Activated naive CD4-positive, alpha-beta T cell treated with anti-CD3 and anti-CD28 coated beads for 36 hours (primary cell): ENCODE measurements at regions of chr11 and their contacts with region 1.

Region 1: GRCh38 chr11:125514336-125515101 is 18.5 kb upstream of the FEZ1 start:
- DNase-seq: peak; percentile 87
- H3K4me3 Mint-ChIP-seq: no peak overlapping the region
- H3K27ac Mint-ChIP-seq: peak overlapping the region; percentile 85
- H3K4me1 Mint-ChIP-seq: peaks cover 41% of the 10 kb centered on the region
- H3K27me3 Mint-ChIP-seq: no peaks in the 10 kb centered on the region

Region 2: GRCh38 chr11:124114942-124115781 is 1399.4 kb before region 1 on chr11 and contains the start of gene VWA5A:
- CTCF ChIA-PET with region 1: no interaction called
- intact Hi-C with region 1: loop called (anchors 5 kb)
- DNase-seq: peak; percentile 93
- H3K4me3 Mint-ChIP-seq: peak within 1 kb of the TSS; percentile 82
- H3K27ac Mint-ChIP-seq: peak within 1 kb of the TSS; percentile 56
- H3K4me1 Mint-ChIP-seq: peaks cover 9% of the 10 kb centered on the region
- H3K27me3 Mint-ChIP-seq: no peaks in the 10 kb centered on the region
- total RNA-seq, gene VWA5A: 9.7 to 11.4 TPM

Region 3: GRCh38 chr11:124953753-124954589 is 560.5 kb before region 1 on chr11 and contains the start of gene CCDC15:
- CTCF ChIA-PET with region 1: no interaction called
- intact Hi-C with region 1: loop called (anchors 10 kb)
- DNase-seq: peak; percentile 97
- H3K4me3 Mint-ChIP-seq: no peak within 1 kb of the TSS
- H3K27ac Mint-ChIP-seq: no peak within 1 kb of the TSS
- H3K4me1 Mint-ChIP-seq: peaks cover 7% of the 10 kb centered on the region
- H3K27me3 Mint-ChIP-seq: no peaks in the 10 kb centered on the region
- total RNA-seq, gene CCDC15: 6.1 to 7.3 TPM

Region 4: DNA sequence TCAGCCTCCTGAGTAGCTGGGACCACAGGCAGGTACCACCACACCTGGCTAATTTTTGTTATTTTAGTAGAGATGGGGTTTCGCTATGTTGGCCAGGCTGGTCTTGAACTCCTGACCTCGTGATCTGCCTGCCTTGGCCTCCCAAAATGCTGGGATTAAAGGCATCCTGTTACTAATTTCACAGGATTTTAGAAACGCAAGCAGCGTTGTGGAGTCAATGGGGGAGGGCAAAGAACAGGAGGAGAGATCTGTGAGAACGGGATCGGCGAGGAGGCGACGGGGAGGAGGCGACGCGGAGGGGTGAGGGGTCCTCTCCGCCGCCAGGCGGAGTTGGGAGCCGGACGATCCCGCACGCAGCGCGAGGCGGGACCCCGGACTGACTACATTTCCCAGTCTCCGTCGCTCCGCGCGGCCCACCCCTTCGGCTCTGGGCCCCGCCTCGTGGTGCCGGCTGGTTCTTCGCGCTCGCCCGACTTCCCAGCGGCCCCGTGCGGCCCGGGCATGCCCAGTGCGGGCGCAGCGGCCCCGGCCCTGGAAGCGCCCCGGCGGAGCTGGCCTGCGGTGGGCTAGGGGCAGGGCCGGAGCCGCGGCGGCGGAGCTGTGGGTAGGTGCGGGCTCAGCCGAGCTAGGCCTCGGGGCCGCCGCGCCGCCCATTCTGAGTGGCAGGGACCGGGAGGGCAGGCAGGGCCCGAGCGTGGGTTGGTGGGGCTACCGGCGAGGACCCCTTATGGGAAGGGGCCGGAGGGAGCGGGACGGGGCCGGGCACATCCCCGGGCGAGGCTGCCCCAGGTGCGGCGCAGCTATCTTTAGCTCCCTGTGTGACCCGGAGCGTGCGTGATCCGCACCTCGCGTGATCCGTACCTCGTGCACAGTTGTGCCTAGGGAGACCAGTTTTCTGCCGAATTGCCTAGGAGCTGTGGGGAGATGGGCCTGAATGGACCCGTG is 54.7 kb after region 1 on chr11 and contains the start of gene EI24:
- CTCF ChIA-PET with region 1: interaction called, 5 read pairs
- intact Hi-C with region 1: loop called (anchors 1 kb)
- DNase-seq: peak; percentile 91
- H3K4me3 Mint-ChIP-seq: peak within 1 kb of the TSS; percentile 94
- H3K27ac Mint-ChIP-seq: peak within 1 kb of the TSS; percentile 92
- H3K4me1 Mint-ChIP-seq: peaks cover 32% of the 10 kb centered on the region
- H3K27me3 Mint-ChIP-seq: no peaks in the 10 kb centered on the region
- total RNA-seq, gene EI24: 28.8 to 33.0 TPM

Region 5: GRCh38 chr11:125625630-125626287 is 111.2 kb after region 1 on chr11:
- CTCF ChIA-PET with region 1: no interaction called
- intact Hi-C with region 1: loop called (anchors 1 kb)
- DNase-seq: peak; percentile 90
- H3K4me3 Mint-ChIP-seq: peak overlapping the region; percentile 89
- H3K27ac Mint-ChIP-seq: peak overlapping the region; percentile 99
- H3K4me1 Mint-ChIP-seq: peaks cover 21% of the 10 kb centered on the region
- H3K27me3 Mint-ChIP-seq: no peaks in the 10 kb centered on the region

Region 6: DNA sequence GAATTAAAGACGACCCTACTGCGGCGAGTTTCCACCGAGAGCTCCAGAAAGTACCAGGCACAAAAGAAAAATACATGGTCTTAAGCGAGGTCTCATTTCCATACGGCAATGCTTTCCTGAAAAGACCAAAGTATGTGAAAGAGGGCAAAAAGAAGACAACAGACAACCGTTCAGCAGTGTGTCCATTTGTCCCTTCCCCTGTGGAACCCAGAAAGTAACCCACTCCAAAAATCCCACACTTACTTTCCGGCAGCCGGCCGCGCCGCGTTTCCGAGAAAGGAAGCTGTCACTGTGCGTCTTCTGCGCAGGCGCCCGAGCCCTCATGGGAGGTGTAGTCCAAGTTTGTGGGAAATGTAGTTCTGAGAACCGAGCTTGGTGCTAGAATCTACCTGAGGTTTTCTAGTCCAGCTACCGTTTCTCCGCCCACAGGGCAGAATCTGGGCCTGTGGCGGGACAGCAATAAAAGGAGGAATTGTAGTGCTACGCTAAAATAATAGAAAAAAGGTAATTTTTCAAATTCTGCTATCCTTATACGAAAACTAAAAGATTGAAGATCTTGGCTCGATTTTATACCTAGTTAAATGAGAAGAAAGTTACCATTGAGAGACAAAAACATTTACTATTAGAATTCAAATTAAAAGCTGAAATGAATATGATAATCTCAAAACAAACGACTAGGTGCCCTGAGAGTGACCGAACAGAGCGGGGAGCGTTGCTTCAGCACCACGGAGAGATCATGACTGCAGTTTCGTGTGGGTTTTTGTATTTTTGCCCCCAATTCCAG is 388.6 kb after region 1 on chr11 and contains the start of gene PUS3:
- CTCF ChIA-PET with region 1: no interaction called
- intact Hi-C with region 1: loop called (anchors 5 kb)
- DNase-seq: peak; percentile 93
- H3K4me3 Mint-ChIP-seq: peak within 1 kb of the TSS; percentile 94
- H3K27ac Mint-ChIP-seq: peak within 1 kb of the TSS; percentile 95
- H3K4me1 Mint-ChIP-seq: peaks cover 37% of the 10 kb centered on the region
- H3K27me3 Mint-ChIP-seq: peaks cover 22% of the 10 kb centered on the region
- total RNA-seq, gene PUS3: 14.9 to 18.5 TPM